Left ventricle myocardium inferior (tissue), 1 donor: ENCODE measurements at regions of chr3 and their contacts with region 1.

Region 1: GRCh38 chr3:52056968-52057805 is 816 bp upstream of the DUSP7 start:
- DNase-seq: peak; percentile 99
- H3K4me3 ChIP-seq: peak overlapping the region; percentile 80
- H3K27ac ChIP-seq: peak overlapping the region; percentile 95
- H3K4me1 ChIP-seq: peaks cover 58% of the 10 kb centered on the region
- H3K27me3 ChIP-seq: no peaks in the 10 kb centered on the region
- CTCF ChIP-seq: no peak

Region 2: GRCh38 chr3:51874889-51875288 is 182.3 kb before region 1 on chr3:
- intact Hi-C with region 1: no loop called
- DNase-seq: no peak
- H3K4me3 ChIP-seq: no peak overlapping the region
- H3K27ac ChIP-seq: no peak overlapping the region
- H3K4me1 ChIP-seq: no peaks in the 10 kb centered on the region
- H3K27me3 ChIP-seq: peaks cover 88% of the 10 kb centered on the region
- CTCF ChIP-seq: no peak

Region 3: GRCh38 chr3:52088445-52089367 is 31.5 kb after region 1 on chr3:
- intact Hi-C with region 1: no loop called
- DNase-seq: no peak
- H3K4me3 ChIP-seq: no peak overlapping the region
- H3K27ac ChIP-seq: peak overlapping the region; percentile 30
- H3K4me1 ChIP-seq: peaks cover 66% of the 10 kb centered on the region
- H3K27me3 ChIP-seq: no peaks in the 10 kb centered on the region
- CTCF ChIP-seq: no peak

Region 4: DNA sequence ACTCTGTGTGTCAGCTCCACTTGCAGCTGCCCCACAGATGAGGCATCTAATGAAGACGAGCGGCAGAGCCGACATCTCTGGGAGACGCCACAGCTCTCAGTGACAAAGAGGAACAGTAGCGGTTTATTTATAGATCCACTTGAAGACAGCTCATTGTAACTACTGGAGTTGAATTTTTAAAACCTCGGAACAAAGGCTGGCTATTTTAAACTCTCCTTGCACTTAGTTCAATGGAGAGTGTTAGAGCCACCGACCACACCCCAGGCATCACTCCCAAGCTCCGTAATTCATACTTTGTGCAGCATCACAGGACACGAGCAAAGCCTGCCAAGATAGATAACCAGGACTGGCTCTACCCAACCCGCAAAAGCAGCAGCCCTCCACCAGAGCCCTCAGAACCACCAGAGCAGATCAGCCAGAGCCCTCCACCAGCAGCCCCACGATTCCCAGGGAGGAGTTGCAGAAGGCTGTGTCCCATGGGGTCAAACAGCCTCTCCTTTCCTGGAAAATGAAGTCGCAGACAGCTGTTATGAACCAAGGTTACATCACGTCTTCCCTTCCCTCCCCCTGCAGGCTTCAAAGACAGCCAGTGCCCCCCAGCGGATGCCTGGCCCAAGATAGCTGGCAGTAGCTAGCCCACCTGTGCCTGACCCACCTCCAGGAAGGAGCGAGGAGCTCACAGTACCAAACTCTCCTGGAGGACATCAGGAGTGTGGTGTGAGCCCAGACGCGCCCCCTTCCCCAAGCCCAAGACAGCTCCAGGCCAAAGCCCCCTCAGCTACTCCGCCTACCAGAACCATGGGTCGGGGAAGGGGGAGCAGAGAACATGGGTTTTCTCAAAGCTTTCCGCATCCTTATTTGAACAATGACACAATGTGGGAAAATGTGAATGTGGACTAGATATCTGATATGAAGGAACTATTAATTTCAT is 51.4 kb after region 1 on chr3:
- intact Hi-C with region 1: loop called (anchors 10 kb)
- DNase-seq: peak; percentile 55
- H3K4me3 ChIP-seq: peak overlapping the region; percentile 53
- H3K27ac ChIP-seq: peak overlapping the region; percentile 85
- H3K4me1 ChIP-seq: peaks cover 45% of the 10 kb centered on the region
- H3K27me3 ChIP-seq: no peaks in the 10 kb centered on the region
- CTCF ChIP-seq: peak; percentile 60